ENCODE measurements at regions of chr15 and their contacts with region 1.

Region 1: GRCh38 chr15:36778531-36778930 is 199.1 kb downstream of the CDIN1 start:
- DNase-seq: no peak
- H3K4me3 ChIP-seq: no peak overlapping the region
- H3K27ac ChIP-seq: no peak overlapping the region
- H3K4me1 ChIP-seq: no peaks in the 10 kb centered on the region
- H3K27me3 ChIP-seq: no peaks in the 10 kb centered on the region
- CTCF ChIP-seq: no peak
- POLR2A ChIP-seq: no peak

Region 2: GRCh38 chr15:36737430-36737891 is 41.1 kb before region 1 on chr15:
- intact Hi-C with region 1: no loop called
- DNase-seq: no peak
- H3K4me3 ChIP-seq: no peak overlapping the region
- H3K27ac ChIP-seq: no peak overlapping the region
- H3K4me1 ChIP-seq: no peaks in the 10 kb centered on the region
- H3K27me3 ChIP-seq: no peaks in the 10 kb centered on the region
- CTCF ChIP-seq: no peak
- POLR2A ChIP-seq: no peak

Region 3: GRCh38 chr15:37165395-37165794 is 386.9 kb after region 1 on chr15:
- intact Hi-C with region 1: loop called (anchors 5 kb)
- DNase-seq: no peak
- H3K4me3 ChIP-seq: no peak overlapping the region
- H3K27ac ChIP-seq: no peak overlapping the region
- H3K4me1 ChIP-seq: no peaks in the 10 kb centered on the region
- H3K27me3 ChIP-seq: no peaks in the 10 kb centered on the region
- CTCF ChIP-seq: no peak
- POLR2A ChIP-seq: no peak